Activated CD4-positive, alpha-beta T cell treated with anti-CD3 and anti-CD28 coated beads for 36 hours (primary cell): ENCODE measurements at regions of chr14 and their contacts with region 1.

Region 1: DNA sequence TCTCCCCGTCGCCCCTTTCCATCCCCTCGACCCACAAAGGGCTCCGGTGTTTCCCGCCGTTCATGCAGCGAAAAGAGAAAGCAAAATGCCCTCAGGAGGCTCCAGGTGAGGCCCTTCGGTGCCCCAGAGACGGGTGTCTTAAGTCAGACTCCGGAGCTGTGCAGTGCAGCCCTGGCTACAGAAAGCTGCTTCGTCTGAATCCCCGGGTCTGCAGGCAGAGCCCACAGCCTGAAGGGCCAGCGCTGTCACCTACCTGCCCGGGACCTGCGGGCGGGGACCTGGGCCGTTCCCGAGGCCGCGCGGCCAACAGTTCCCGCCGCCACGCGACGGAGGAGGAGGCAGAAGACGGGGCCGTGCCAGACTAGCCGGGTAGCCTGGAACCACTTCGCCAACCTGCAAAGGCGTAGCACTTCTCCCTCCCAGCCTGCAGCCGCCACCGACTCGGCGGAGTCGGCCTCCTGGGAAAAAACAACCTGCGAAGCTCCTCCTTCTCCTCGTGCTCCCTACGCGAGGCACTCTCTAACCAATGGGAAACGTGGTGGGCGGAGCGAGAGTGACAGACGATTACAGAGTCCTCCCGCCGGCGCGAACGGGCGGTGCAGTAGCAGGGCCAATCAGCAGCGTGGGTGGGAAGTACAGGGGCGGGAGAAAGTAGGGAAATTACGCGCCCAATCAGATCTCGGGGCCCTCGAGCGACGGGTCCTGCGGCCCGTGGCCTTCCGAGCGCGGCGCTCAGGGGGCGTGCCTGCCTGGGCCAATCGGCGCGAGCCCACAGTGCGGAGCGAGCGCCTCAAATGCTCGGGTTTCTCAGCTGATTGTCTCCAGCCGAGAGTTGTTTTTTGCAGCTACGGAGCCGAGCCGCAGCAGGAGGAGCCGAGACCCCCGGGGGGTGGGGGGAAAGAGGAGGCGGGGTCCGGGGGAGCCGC is at the starts of genes GPR137C and TXNDC16:
- DNase-seq: peak; percentile 100
- ATAC-seq: peak; percentile 96
- H3K4me3 Mint-ChIP-seq: peak within 1 kb of the TSS; percentile 85
- H3K27ac Mint-ChIP-seq: peak within 1 kb of the TSS; percentile 86
- H3K4me1 Mint-ChIP-seq: peaks cover 18% of the 10 kb centered on the region
- H3K27me3 Mint-ChIP-seq: peaks cover 4% of the 10 kb centered on the region
- total RNA-seq, gene GPR137C: 0.04 to 0.14 TPM
- total RNA-seq, gene TXNDC16: 4.0 to 5.2 TPM

Region 2: GRCh38 chr14:51239813-51240803 is 1312.2 kb before region 1 on chr14 and contains the start of gene TMX1:
- CTCF ChIA-PET with region 1: no interaction called
- POLR2A ChIA-PET with region 1: no interaction called
- intact Hi-C with region 1: loop called in 1 of 2 experiments (anchors 5 kb)
- DNase-seq: peak; percentile 94
- ATAC-seq: peak; percentile 93
- H3K4me3 Mint-ChIP-seq: no peak within 1 kb of the TSS
- H3K27ac Mint-ChIP-seq: no peak within 1 kb of the TSS
- H3K4me1 Mint-ChIP-seq: peaks cover 15% of the 10 kb centered on the region
- H3K27me3 Mint-ChIP-seq: no peaks in the 10 kb centered on the region
- total RNA-seq, gene TMX1: 38.8 to 55.9 TPM

Region 3: DNA sequence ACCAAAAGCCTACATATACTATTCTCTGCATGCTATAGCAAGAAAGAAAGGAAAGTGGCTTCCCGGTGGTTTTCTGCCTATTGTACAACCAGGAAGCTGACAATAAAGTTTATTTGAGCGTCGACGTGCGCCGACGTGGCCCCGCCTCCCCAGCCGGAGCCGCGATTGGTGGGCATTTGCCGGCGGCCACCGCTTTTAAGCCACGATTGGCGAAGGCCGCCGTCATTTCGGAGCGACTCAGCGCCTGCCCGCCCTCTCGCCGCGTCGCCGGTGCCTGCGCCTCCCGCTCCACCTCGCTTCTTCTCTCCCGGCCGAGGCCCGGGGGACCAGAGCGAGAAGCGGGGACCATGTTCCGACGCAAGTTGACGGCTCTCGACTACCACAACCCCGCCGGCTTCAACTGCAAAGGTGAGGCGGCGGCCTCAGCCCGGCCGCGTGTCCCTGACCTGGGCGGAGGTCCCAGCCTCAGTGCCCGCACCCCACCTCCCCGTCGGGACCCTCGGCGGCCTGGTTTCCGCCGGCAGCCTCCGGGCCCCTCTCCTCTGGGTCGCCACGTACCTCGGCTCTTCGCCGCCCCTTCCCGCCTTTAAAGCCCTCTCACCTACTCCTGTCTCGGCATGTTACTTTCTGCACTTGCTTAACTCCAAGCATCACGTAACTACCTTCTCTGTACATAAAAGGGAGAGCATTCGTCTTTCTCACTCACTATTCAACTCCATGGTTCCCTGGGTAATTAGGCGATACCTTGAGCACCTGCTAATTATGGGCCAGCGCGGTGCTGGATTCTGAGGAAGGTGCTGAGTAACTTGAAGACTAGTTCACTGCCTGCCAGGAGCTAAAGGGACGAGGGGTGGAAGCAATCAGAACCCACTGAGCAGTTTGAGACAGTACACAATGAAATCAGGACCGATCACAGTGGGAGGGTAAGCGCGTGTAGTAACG is 562.8 kb before region 1 on chr14 and contains the start of gene RTRAF:
- CTCF ChIA-PET with region 1: no interaction called
- POLR2A ChIA-PET with region 1: no interaction called
- intact Hi-C with region 1: loop called in 1 of 2 experiments (anchors 1 kb)
- DNase-seq: peak; percentile 96
- ATAC-seq: peak; percentile 97
- H3K4me3 Mint-ChIP-seq: peak within 1 kb of the TSS; percentile 100
- H3K27ac Mint-ChIP-seq: peak within 1 kb of the TSS; percentile 98
- H3K4me1 Mint-ChIP-seq: peaks cover 40% of the 10 kb centered on the region
- H3K27me3 Mint-ChIP-seq: no peaks in the 10 kb centered on the region
- total RNA-seq, gene RTRAF: 232 to 254 TPM

Region 4: GRCh38 chr14:52531481-52531880 is 20.8 kb before region 1 on chr14:
- CTCF ChIA-PET with region 1: interaction called, 3 read pairs
- POLR2A ChIA-PET with region 1: no interaction called
- intact Hi-C with region 1: loop called in 1 of 2 experiments (anchors 2 kb)
- DNase-seq: no peak
- ATAC-seq: peak; percentile 82
- H3K4me3 Mint-ChIP-seq: no peak overlapping the region
- H3K27ac Mint-ChIP-seq: no peak overlapping the region
- H3K4me1 Mint-ChIP-seq: no peaks in the 10 kb centered on the region
- H3K27me3 Mint-ChIP-seq: no peaks in the 10 kb centered on the region

Region 5: GRCh38 chr14:52706724-52707706 is 154.7 kb after region 1 on chr14 and contains the start of gene PSMC6:
- CTCF ChIA-PET with region 1: no interaction called
- POLR2A ChIA-PET with region 1: no interaction called
- intact Hi-C with region 1: loop called (anchors 1 kb)
- DNase-seq: peak; percentile 98
- ATAC-seq: peak; percentile 96
- H3K4me3 Mint-ChIP-seq: peak within 1 kb of the TSS; percentile 91
- H3K27ac Mint-ChIP-seq: peak within 1 kb of the TSS; percentile 92
- H3K4me1 Mint-ChIP-seq: peaks cover 41% of the 10 kb centered on the region
- H3K27me3 Mint-ChIP-seq: no peaks in the 10 kb centered on the region
- total RNA-seq, gene PSMC6: 87.0 to 121 TPM

Region 6: GRCh38 chr14:52791203-52792096 is 239.1 kb after region 1 on chr14 and contains the start of gene GNPNAT1:
- CTCF ChIA-PET with region 1: interaction called, 3 read pairs
- POLR2A ChIA-PET with region 1: no interaction called
- intact Hi-C with region 1: loop called (anchors 1 kb)
- DNase-seq: peak; percentile 90
- ATAC-seq: peak; percentile 91
- H3K4me3 Mint-ChIP-seq: peak within 1 kb of the TSS; percentile 95
- H3K27ac Mint-ChIP-seq: peak within 1 kb of the TSS; percentile 80
- H3K4me1 Mint-ChIP-seq: peaks cover 33% of the 10 kb centered on the region
- H3K27me3 Mint-ChIP-seq: no peaks in the 10 kb centered on the region
- total RNA-seq, gene GNPNAT1: 31.1 to 33.6 TPM

Region 7: DNA sequence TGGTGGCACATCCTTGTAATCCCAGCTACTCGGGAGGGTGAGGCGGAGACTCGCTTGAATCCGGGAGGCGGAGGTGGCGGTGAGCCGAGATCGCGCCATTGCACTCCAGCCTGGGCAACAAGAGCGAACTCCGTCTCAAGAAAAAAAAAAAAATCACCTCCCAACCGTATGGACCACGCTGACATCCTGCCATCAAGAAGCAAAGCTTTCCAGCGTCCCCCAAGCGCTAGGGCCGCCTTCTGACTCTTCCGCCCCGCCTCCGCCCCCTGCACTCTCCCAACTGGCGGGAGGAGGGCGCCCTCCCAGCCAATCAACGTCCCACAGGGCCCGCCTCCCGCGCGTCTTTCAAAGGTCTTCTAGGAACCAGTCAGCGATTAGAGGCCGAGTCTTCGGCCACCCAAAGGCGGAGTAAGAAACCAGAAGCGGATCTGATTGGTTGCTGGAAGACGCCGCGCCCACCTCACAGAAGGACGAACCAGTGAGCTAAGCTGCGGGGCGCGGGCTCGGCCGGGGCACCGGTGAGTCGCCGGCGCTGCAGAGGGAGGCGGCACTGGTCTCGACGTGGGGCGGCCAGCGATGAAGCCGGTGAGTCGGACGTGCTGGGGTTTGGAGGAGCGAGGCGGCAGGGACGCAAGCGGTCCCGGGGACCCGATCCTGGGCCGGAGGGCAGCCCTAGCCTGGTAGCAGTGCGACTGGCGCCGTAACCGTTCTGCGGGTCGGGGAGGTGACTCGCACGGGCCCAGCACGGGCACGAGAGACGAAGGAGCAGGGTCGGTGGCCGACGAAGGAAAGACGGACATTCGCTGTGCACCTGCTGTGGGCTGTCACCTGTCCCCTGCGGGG is 1844.4 kb after region 1 on chr14 and contains the start of gene CDKN3:
- CTCF ChIA-PET with region 1: no interaction called
- POLR2A ChIA-PET with region 1: no interaction called
- intact Hi-C with region 1: loop called in 1 of 2 experiments (anchors 2 kb)
- DNase-seq: peak; percentile 98
- ATAC-seq: peak; percentile 97
- H3K4me3 Mint-ChIP-seq: peak within 1 kb of the TSS; percentile 82
- H3K27ac Mint-ChIP-seq: peak within 1 kb of the TSS; percentile 76
- H3K4me1 Mint-ChIP-seq: peaks cover 24% of the 10 kb centered on the region
- H3K27me3 Mint-ChIP-seq: no peaks in the 10 kb centered on the region
- total RNA-seq, gene CDKN3: 86.7 to 133 TPM